ENCODE measurements at regions of chr13 and their contacts with region 1.

Region 1: DNA sequence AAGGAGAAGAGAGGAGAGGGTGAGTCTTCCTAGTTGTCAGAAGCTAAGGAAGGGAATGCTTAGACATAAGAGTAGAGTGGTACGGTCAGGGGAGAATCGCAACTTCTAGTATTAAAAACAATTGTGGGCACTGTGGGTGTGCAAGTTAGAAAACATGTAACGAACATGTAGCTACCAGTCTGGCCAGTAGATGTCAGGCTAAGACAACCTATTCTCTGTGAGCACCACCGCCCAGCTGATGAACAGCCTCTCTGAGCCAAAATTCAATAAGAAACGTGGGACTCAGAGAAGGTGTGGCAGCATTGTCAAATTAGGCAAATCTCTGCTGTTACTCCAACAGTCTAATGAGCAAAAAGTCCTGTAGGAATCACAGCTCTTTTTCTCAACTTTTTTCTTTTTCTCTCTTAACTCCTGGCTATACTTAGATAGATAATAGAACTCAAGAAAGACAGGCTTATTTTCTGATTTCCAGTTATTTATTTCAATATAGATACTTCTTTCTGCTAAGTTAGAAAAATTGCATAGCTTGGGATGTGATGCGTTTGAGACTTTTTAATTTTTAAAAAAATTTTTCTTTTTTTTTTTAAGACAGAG is 186.2 kb downstream of the USP12 start:
- DNase-seq: peak; percentile 81
- H3K4me3 ChIP-seq: no peak overlapping the region
- H3K27ac ChIP-seq: no peak overlapping the region
- H3K4me1 ChIP-seq: peaks cover 4% of the 10 kb centered on the region
- H3K27me3 ChIP-seq: no peaks in the 10 kb centered on the region
- CTCF ChIP-seq: peak; percentile 40 to 85 (median 82)
- POLR2A ChIP-seq: no peak

Region 2: GRCh38 chr13:26946684-26947343 is 38.6 kb before region 1 on chr13:
- intact Hi-C with region 1: loop called (anchors 5 kb)
- DNase-seq: no peak
- H3K4me3 ChIP-seq: no peak overlapping the region
- H3K27ac ChIP-seq: no peak overlapping the region
- H3K4me1 ChIP-seq: no peaks in the 10 kb centered on the region
- H3K27me3 ChIP-seq: no peaks in the 10 kb centered on the region
- CTCF ChIP-seq: peak in 3 of 4 experiments; percentile 50 to 72 (median 66)
- POLR2A ChIP-seq: no peak

Region 3: GRCh38 chr13:27379694-27380641 is 394.6 kb after region 1 on chr13:
- intact Hi-C with region 1: no loop called
- DNase-seq: peak; percentile 26
- H3K4me3 ChIP-seq: no peak overlapping the region
- H3K27ac ChIP-seq: no peak overlapping the region
- H3K4me1 ChIP-seq: no peaks in the 10 kb centered on the region
- H3K27me3 ChIP-seq: no peaks in the 10 kb centered on the region
- CTCF ChIP-seq: peak in 3 of 4 experiments; percentile 14 to 52 (median 39)
- POLR2A ChIP-seq: no peak

Measured in prostate gland (tissue), 2 donors.